CD4-positive, alpha-beta T cell (primary cell): ENCODE measurements at regions of chr22 and their contacts with region 1.

Region 1: GRCh38 chr22:22959147-22959827 is 71.7 kb downstream of the IGLL5 start:
- DNase-seq: peak; percentile 55 to 84 (median 66)
- ATAC-seq: no peak
- H3K4me3 ChIP-seq: no peak overlapping the region
- H3K4me3 Mint-ChIP-seq: no peak overlapping the region
- H3K27ac ChIP-seq: no peak overlapping the region
- H3K27ac Mint-ChIP-seq: no peak overlapping the region
- H3K4me1 ChIP-seq: peaks cover 4% of the 10 kb centered on the region
- H3K4me1 Mint-ChIP-seq: peaks cover 4% of the 10 kb centered on the region
- H3K27me3 ChIP-seq: peaks cover 0 to 10% of the 10 kb centered on the region in 2 experiments
- H3K27me3 Mint-ChIP-seq: peaks cover 53% of the 10 kb centered on the region
- CTCF ChIP-seq: peak; percentile 82

Region 2: DNA sequence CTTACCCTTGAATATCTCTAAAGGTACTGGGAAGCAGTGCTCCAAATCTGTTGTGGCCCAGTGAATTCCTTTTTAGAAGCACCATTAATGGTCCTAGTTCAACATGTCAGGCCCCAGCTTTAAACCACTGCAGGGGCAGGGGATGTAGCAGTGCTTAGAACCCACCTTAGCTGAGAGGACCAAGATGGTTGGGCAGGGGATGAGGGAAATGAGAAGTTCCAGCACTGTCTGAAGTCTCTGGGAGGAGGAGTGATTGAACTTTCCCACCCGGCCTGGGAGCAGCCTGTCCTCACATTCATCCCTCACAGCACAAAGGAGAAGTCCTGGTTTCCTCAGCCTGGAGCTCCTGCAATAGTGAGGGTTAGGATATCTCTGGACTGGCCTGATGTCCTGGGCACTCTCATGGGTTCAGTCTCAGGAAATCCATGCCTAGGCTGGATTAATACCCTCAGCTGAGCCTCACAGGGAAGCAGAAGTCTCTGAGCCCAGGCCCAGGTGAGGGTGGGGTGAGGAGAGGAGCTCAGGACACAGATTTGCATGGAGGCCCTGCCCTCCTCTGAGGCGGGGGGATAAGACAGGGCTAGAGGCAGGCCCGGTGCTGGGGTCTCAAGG is 371.6 kb before region 1 on chr22:
- CTCF ChIA-PET with region 1: interaction called, 5 read pairs
- POLR2A ChIA-PET with region 1: interaction called, 3 read pairs
- intact Hi-C with region 1: loop called in 1 of 2 experiments (anchors 2 kb)
- DNase-seq: no peak
- ATAC-seq: no peak
- H3K4me3 ChIP-seq: no peak overlapping the region
- H3K4me3 Mint-ChIP-seq: no peak overlapping the region
- H3K27ac ChIP-seq: no peak overlapping the region
- H3K27ac Mint-ChIP-seq: no peak overlapping the region
- H3K4me1 ChIP-seq: no peaks in the 10 kb centered on the region
- H3K4me1 Mint-ChIP-seq: no peaks in the 10 kb centered on the region
- H3K27me3 ChIP-seq: peaks cover 5 to 9% of the 10 kb centered on the region in 2 experiments
- H3K27me3 Mint-ChIP-seq: peaks cover 25% of the 10 kb centered on the region
- CTCF ChIP-seq: no peak

Region 3: GRCh38 chr22:22692707-22693530 is 266.4 kb before region 1 on chr22:
- CTCF ChIA-PET with region 1: no interaction called
- POLR2A ChIA-PET with region 1: no interaction called
- intact Hi-C with region 1: loop called in 1 of 2 experiments (anchors 2 kb)
- DNase-seq: peak; percentile 56 to 80 (median 64)
- ATAC-seq: peak; percentile 80
- H3K4me3 ChIP-seq: no peak overlapping the region
- H3K4me3 Mint-ChIP-seq: no peak overlapping the region
- H3K27ac ChIP-seq: no peak overlapping the region
- H3K27ac Mint-ChIP-seq: no peak overlapping the region
- H3K4me1 ChIP-seq: no peaks in the 10 kb centered on the region
- H3K4me1 Mint-ChIP-seq: no peaks in the 10 kb centered on the region
- H3K27me3 ChIP-seq: no peaks in the 10 kb centered on the region
- H3K27me3 Mint-ChIP-seq: no peaks in the 10 kb centered on the region
- CTCF ChIP-seq: peak; percentile 79

Region 4: DNA sequence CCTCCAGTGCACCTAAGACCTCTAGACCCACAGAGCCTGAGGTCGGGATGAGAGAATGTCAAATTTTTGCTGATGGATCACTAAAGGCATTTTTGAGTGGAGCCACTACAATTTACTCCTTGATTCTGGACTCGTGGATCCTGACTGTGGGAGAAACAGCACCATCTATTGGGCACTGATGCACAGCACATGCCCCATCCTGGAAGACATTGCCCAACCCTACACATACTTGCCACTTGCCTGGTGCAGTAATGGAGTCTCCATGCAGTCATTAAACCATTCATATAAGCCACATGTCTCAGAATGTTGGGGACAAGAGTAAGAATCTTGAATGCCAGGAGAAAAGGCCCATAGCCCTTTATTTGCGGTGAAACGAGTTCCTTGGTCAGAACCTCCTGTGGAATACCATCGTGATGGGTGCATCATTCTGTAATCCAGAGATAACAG is 211.0 kb before region 1 on chr22:
- CTCF ChIA-PET with region 1: interaction called, 5 read pairs
- POLR2A ChIA-PET with region 1: interaction called, 5 read pairs
- intact Hi-C with region 1: loop called in 1 of 2 experiments (anchors 2 kb)
- DNase-seq: peak in 8 of 14 experiments; percentile 8 to 72 (median 40)
- ATAC-seq: peak; percentile 54
- H3K4me3 ChIP-seq: no peak overlapping the region
- H3K4me3 Mint-ChIP-seq: no peak overlapping the region
- H3K27ac ChIP-seq: no peak overlapping the region
- H3K27ac Mint-ChIP-seq: no peak overlapping the region
- H3K4me1 ChIP-seq: peaks cover 19% of the 10 kb centered on the region
- H3K4me1 Mint-ChIP-seq: peaks cover 22% of the 10 kb centered on the region
- H3K27me3 ChIP-seq: peaks cover 0 to 4% of the 10 kb centered on the region in 2 experiments
- H3K27me3 Mint-ChIP-seq: peaks cover 4% of the 10 kb centered on the region
- CTCF ChIP-seq: peak; percentile 63

Region 5: DNA sequence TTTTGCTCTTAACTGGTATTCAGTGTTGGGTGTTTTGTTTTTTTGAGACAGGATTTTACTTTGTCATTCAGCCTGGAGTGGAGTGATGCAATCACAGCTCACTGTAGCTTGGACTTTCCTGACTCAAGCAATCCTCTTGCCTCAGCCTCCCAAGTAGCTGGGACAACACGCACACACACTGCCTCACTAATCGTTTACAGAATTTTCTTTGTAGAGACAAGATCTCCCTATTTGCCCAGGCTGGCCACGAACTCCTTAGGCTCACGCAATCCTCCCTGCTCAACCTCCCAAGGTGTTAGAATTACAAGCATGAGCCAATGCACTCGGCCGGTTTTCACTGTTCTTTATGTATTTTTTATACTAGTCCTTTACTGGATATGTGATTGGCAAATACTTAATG is 122.7 kb before region 1 on chr22:
- CTCF ChIA-PET with region 1: no interaction called
- POLR2A ChIA-PET with region 1: no interaction called
- intact Hi-C with region 1: no loop called
- DNase-seq: peak in 2 of 14 experiments; percentile 40 to 57
- ATAC-seq: no peak
- H3K4me3 ChIP-seq: no peak overlapping the region
- H3K4me3 Mint-ChIP-seq: no peak overlapping the region
- H3K27ac ChIP-seq: no peak overlapping the region
- H3K27ac Mint-ChIP-seq: no peak overlapping the region
- H3K4me1 ChIP-seq: peaks cover 13% of the 10 kb centered on the region
- H3K4me1 Mint-ChIP-seq: peaks cover 28% of the 10 kb centered on the region
- H3K27me3 ChIP-seq: no peaks in the 10 kb centered on the region
- H3K27me3 Mint-ChIP-seq: no peaks in the 10 kb centered on the region
- CTCF ChIP-seq: no peak

Region 6: DNA sequence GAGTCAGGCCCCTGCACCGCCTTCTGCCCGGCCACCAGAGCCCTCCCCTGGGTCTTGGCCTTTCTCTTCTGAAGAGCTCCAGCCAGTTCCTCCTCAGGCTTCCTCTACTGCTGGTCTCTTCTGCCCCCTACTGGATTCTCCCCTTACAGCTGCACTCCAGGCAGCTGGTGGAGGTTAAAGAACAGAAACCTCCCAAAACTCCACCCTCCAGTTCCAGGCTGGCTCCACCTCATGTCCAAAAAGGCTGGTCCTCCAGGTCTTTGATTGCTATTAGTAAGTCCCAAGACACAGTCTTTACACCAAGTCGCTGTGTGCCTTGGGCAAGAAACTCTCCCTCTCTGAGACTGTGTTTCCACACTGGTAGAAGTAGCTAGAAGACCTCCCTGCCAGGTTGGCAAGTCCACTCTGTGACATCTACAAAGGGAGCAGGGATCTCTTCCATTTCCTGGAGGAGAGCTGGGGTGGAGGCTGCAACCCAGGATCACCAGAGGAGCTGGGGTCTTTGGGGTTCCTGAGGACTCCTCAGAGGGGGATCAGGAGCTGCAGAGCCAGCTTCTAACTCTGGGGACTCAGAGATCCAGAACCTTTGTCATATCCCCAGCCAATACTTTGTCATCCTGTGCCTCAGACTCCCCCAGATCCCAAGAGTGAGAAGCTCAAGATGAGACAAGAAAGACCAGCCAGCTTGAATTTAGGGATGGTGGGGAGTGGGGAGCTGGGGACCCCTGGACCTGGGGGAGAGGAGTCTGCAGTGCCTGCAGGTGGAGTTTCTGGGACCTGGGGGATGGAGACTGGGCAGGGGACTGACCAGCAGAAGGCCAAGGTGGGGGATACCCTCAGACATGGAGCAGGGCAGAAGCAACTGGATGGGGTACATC is 75.0 kb before region 1 on chr22:
- CTCF ChIA-PET with region 1: interaction called, 3 read pairs
- POLR2A ChIA-PET with region 1: no interaction called
- intact Hi-C with region 1: loop called in 1 of 2 experiments (anchors 5 kb)
- DNase-seq: peak; percentile 43 to 87 (median 57)
- ATAC-seq: peak; percentile 90
- H3K4me3 ChIP-seq: no peak overlapping the region
- H3K4me3 Mint-ChIP-seq: no peak overlapping the region
- H3K27ac ChIP-seq: no peak overlapping the region
- H3K27ac Mint-ChIP-seq: no peak overlapping the region
- H3K4me1 ChIP-seq: peaks cover 5% of the 10 kb centered on the region
- H3K4me1 Mint-ChIP-seq: no peaks in the 10 kb centered on the region
- H3K27me3 ChIP-seq: peaks cover 0 to 4% of the 10 kb centered on the region in 2 experiments
- H3K27me3 Mint-ChIP-seq: no peaks in the 10 kb centered on the region
- CTCF ChIP-seq: peak; percentile 83

Region 7: GRCh38 chr22:23270212-23270733 is 311.0 kb after region 1 on chr22:
- CTCF ChIA-PET with region 1: no interaction called
- POLR2A ChIA-PET with region 1: no interaction called
- intact Hi-C with region 1: no loop called
- DNase-seq: no peak
- ATAC-seq: no peak
- H3K4me3 ChIP-seq: no peak overlapping the region
- H3K4me3 Mint-ChIP-seq: no peak overlapping the region
- H3K27ac ChIP-seq: no peak overlapping the region
- H3K27ac Mint-ChIP-seq: peak overlapping the region; percentile 30
- H3K4me1 ChIP-seq: no peaks in the 10 kb centered on the region
- H3K4me1 Mint-ChIP-seq: no peaks in the 10 kb centered on the region
- H3K27me3 ChIP-seq: no peaks in the 10 kb centered on the region
- H3K27me3 Mint-ChIP-seq: no peaks in the 10 kb centered on the region
- CTCF ChIP-seq: no peak

Region 8: GRCh38 chr22:23281406-23282088 is 322.3 kb after region 1 on chr22:
- CTCF ChIA-PET with region 1: interaction called, 4 read pairs
- POLR2A ChIA-PET with region 1: no interaction called
- intact Hi-C with region 1: loop called (anchors 2 kb)
- DNase-seq: peak; percentile 68 to 88 (median 78)
- ATAC-seq: peak; percentile 78
- H3K4me3 ChIP-seq: no peak overlapping the region
- H3K4me3 Mint-ChIP-seq: no peak overlapping the region
- H3K27ac ChIP-seq: no peak overlapping the region
- H3K27ac Mint-ChIP-seq: no peak overlapping the region
- H3K4me1 ChIP-seq: peaks cover 21% of the 10 kb centered on the region
- H3K4me1 Mint-ChIP-seq: no peaks in the 10 kb centered on the region
- H3K27me3 ChIP-seq: no peaks in the 10 kb centered on the region
- H3K27me3 Mint-ChIP-seq: no peaks in the 10 kb centered on the region
- CTCF ChIP-seq: peak; percentile 95